Sigmoid colon (tissue), 7 donors: ENCODE measurements at regions of chr5 and their contacts with region 1.

Region 1: DNA sequence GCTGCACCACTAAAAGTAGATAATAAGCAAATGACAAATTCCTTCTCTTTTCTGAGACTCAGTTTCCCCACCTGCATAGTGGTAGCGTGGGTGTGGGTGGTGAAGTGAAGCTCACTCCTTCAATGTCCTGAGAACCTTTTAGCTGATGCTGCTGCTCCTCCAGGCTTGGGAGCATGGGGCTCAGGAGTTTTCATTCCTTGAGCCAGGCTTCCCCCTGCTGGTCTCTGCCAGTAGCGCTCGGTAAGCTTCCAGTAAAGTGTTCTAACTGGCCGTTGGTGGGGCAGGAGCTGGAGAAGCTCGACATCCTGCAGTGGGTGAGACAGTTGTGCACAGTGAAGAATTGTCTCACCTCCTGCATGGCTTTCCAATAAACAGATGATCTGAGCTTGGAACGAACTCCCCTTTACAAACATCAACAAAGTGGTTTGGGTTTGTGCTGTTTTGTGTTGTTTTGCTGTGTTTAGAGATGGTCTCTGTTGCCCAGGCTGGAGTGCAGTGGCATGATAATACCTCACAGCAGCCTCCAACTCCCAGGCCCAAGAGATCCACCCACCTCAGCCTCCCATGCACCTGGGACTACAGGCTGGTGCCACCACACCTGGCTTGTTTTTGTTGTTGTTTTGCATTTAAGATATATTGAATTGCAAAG is 34.6 kb downstream of the SPARC start:
- DNase-seq: peak; percentile 85
- H3K4me3 ChIP-seq: no peak overlapping the region
- H3K27ac ChIP-seq: no peak overlapping the region
- H3K4me1 ChIP-seq: no peaks in the 10 kb centered on the region
- H3K27me3 ChIP-seq: no peaks in the 10 kb centered on the region
- CTCF ChIP-seq: peak; percentile 48 to 85 (median 78)
- EP300 ChIP-seq: no peak
- POLR2A ChIP-seq: no peak

Region 2: GRCh38 chr5:151499501-151500035 is 152.6 kb before region 1 on chr5:
- intact Hi-C with region 1: loop called (anchors 5 kb)
- DNase-seq: no peak
- H3K4me3 ChIP-seq: no peak overlapping the region
- H3K27ac ChIP-seq: no peak overlapping the region
- H3K4me1 ChIP-seq: no peaks in the 10 kb centered on the region
- H3K27me3 ChIP-seq: no peaks in the 10 kb centered on the region
- CTCF ChIP-seq: no peak
- EP300 ChIP-seq: no peak
- POLR2A ChIP-seq: no peak